Heart left ventricle (tissue), 16 donors: ENCODE measurements at regions of chr15 and their contacts with region 1.

Region 1: GRCh38 chr15:78241007-78241406 is 6.6 kb upstream of the ACSBG1 start:
- DNase-seq: peak; percentile 81 to 91 (median 85)
- ATAC-seq: peak; percentile 92 to 95 (median 94)
- H3K4me3 ChIP-seq: no peak overlapping the region
- H3K27ac ChIP-seq: no peak overlapping the region
- H3K4me1 ChIP-seq: peaks cover 0 to 14% (median 3%) of the 10 kb centered on the region in 12 donors
- H3K27me3 ChIP-seq: no peaks in the 10 kb centered on the region
- CTCF ChIP-seq: peak; percentile 81 to 93 (median 88)
- POLR2A ChIP-seq: no peak

Region 2: DNA sequence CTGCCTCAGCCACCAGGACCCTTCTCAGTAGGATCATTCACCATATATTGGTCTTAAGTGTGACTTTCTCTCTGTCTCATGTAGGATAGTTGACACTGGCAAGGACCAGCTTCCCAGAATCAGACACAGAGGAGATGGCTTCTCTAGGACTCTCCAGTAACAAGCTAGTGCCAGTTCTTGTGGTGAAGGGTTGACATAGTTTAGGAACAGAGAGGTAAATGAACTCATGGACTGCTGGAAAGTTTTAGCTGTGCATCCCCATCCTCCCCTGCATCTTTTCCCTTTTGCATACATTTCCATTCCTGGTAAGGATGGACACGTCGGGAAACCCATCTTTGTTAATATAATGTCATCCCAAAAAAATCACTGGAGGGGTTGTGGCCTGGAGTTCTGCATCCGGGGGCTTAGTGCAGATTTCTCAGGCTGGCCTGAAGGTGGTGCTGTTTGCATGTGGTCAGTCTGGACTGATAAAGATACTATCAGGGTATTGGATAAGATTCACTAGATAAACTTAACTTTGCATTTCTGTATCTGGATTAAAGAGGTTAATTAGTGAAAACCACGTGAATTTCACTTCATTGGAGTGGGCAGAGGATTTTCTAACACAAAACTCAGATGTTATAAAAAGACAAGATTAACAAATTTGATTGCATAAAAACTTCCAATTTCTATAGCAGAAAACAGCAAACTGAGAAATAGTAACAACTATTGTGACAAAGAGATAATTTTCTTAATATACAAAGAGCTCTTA is 274.3 kb before region 1 on chr15:
- intact Hi-C with region 1: loop called in 7 of 10 experiments (anchors 5 kb)
- DNase-seq: peak in 1 of 5 donors; percentile 55
- ATAC-seq: peak; percentile 63 to 85 (median 73)
- H3K4me3 ChIP-seq: no peak overlapping the region
- H3K27ac ChIP-seq: no peak overlapping the region
- H3K4me1 ChIP-seq: peaks cover 0 to 4% (median 0%) of the 10 kb centered on the region in 12 donors
- H3K27me3 ChIP-seq: no peaks in the 10 kb centered on the region
- CTCF ChIP-seq: peak; percentile 74 to 91 (median 86)
- POLR2A ChIP-seq: no peak

Region 3: DNA sequence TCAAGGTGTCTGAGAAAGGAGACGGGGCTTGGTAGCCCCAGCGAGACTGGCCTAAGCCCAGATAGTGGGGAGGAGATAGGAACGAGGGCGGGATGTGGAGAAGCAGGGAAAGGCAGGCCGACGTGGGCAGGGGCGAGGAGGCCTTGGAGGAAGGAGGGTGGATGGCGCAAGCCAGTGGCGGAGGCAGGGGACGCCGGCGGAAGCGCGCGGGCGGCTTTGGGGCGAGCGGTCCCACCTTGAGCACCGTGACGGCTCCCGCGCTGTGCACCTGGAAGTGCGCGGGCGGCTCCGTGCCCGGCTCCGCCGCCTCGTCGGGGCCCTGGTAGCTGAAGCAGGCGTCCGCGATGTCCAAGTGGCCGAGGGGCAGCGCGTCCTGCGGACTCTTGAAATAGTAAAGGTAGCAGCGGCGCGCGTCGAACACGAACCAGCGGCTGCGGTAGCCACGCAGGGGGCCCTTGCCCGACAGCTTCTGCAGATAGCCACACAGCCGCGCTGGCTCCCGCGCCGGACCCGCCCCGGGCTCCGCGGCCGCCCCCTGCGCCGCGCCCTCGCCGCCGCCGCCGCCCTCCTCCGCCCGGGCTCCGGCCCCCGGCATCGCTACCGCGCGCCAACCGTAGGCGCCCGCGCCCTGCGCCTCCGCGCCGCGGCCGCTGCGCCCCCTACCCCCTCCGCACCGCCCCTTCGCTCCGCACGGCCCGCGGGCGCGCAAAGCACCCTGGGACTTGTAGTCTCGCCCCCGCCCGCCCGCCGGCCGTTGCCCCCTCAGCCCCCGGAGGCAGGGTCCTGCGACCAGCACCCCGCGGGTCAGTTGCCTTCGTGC is 163.7 kb before region 1 on chr15 and contains the start of gene TBC1D2B:
- intact Hi-C with region 1: no loop called
- DNase-seq: peak; percentile 63 to 89 (median 75)
- ATAC-seq: peak; percentile 20 to 78 (median 64)
- H3K4me3 ChIP-seq: peak within 1 kb of the TSS; percentile 73 to 100 (median 90)
- H3K27ac ChIP-seq: peak within 1 kb of the TSS; percentile 73 to 97 (median 90)
- H3K4me1 ChIP-seq: peaks cover 0 to 52% (median 30%) of the 10 kb centered on the region in 12 donors
- H3K27me3 ChIP-seq: no peaks in the 10 kb centered on the region
- CTCF ChIP-seq: peak in 3 of 12 donors; percentile 1 to 23 (median 7)
- POLR2A ChIP-seq: no peak
- total RNA-seq, gene TBC1D2B: 6.5 to 45.2 (median 10.8) TPM

Region 4: GRCh38 chr15:78131295-78132061 is 109.5 kb before region 1 on chr15 and contains the start of gene CIB2:
- intact Hi-C with region 1: loop called in 8 of 10 experiments (anchors 5 kb)
- DNase-seq: peak; percentile 76 to 90 (median 78)
- ATAC-seq: peak; percentile 48 to 95 (median 86)
- H3K4me3 ChIP-seq: peak within 1 kb of the TSS; percentile 58 to 97 (median 76)
- H3K27ac ChIP-seq: peak within 1 kb of the TSS; percentile 58 to 93 (median 80)
- H3K4me1 ChIP-seq: peaks cover 0 to 18% (median 7%) of the 10 kb centered on the region in 12 donors
- H3K27me3 ChIP-seq: no peaks in the 10 kb centered on the region
- CTCF ChIP-seq: peak; percentile 52 to 93 (median 83)
- POLR2A ChIP-seq: peak in 1 of 2 donors; percentile 47
- total RNA-seq, gene CIB2: 3.3 to 18.5 (median 10.4) TPM

Region 5: DNA sequence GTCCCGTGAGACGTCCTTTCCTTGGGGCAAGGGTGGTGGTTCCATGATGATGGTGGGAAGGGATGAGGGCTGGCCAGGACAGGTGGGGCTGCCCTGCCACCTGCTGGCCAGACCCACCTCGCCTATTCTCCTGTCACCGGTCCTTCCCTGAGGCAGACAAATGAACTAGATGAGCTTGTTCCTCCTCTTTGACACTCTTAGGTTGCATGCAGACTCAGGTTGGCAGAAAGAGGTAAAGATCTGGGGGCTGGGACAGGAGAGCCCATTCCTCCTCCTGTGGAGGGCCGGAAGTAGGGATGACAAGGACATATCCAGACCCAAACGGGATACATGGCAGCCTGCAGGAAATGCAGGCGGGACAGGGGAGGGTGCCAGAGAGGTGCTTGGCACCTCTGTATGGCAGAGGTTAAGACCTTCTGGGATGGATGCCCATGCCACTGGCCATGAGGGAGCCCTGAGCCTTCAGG is 45.2 kb before region 1 on chr15:
- intact Hi-C with region 1: loop called in 5 of 10 experiments (anchors 2 to 5 kb)
- DNase-seq: peak in 2 of 5 donors; percentile 28 to 67
- ATAC-seq: peak; percentile 79 to 86 (median 80)
- H3K4me3 ChIP-seq: no peak overlapping the region
- H3K27ac ChIP-seq: no peak overlapping the region
- H3K4me1 ChIP-seq: no peaks in the 10 kb centered on the region
- H3K27me3 ChIP-seq: no peaks in the 10 kb centered on the region
- CTCF ChIP-seq: peak; percentile 51 to 74 (median 64)
- POLR2A ChIP-seq: no peak

Region 6: GRCh38 chr15:78299101-78299930 is 58.3 kb after region 1 on chr15 and contains the start of gene SKIC8:
- intact Hi-C with region 1: loop called in 1 of 10 experiments (anchors 2 kb)
- DNase-seq: peak; percentile 91 to 96 (median 94)
- ATAC-seq: peak; percentile 99 to 100 (median 99)
- H3K4me3 ChIP-seq: peak within 1 kb of the TSS; percentile 64 to 98 (median 87)
- H3K27ac ChIP-seq: peak within 1 kb of the TSS; percentile 4 to 87 (median 76)
- H3K4me1 ChIP-seq: peaks cover 0 to 19% (median 10%) of the 10 kb centered on the region in 12 donors
- H3K27me3 ChIP-seq: peaks cover 0 to 8% (median 0%) of the 10 kb centered on the region in 9 donors
- CTCF ChIP-seq: no peak
- POLR2A ChIP-seq: peak in 1 of 2 donors; percentile 71
- total RNA-seq, gene SKIC8: 20.8 to 34.4 (median 27.8) TPM